GM10248 (cell line): ENCODE measurements at regions of chr17 and their contacts with region 1.

Region 1: GRCh38 chr17:29219378-29220047 is 27.1 kb upstream of the CRYBA1 start:
- DNase-seq: peak; percentile 80
- CTCF ChIP-seq: peak; percentile 87

Region 2: DNA sequence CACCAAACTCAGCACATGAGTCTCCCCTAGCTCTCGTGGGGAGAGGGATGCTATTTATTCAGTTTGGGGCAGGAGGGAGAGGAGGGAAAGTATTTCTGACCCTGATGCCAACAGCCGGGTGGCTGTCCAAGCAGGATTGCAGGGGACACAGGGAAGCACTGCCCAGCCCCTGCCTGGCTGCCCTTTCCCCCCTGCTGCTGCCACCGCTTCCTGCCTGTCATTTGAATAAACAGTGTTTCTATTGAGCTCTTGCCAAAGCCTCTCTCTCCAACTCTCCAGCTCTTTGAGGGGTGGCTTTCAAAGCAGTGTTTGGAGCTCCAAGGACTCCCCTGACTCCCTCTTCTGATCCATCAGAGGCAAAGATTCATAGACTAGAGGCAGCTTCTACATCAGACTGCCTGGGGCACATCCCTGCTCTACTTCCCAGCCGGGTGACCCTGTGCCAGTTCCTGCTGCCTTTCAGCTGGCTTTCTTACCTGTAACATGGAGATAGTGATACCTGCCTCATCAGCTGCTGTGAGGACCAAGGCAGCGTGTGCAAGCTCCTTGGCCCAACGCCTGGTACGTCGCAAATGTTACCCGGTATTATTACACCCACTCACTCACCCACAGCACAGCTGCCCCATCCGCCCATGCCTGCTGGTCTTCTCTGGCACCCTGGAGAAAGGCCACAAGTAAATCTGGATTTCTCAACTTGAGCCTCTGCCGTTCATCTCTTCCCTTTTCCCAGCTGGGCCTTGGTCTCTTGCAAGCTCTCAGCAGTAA is 517.3 kb before region 1 on chr17:
- CTCF ChIA-PET with region 1: no interaction called
- POLR2A ChIA-PET with region 1: no interaction called
- DNase-seq: no peak
- CTCF ChIP-seq: no peak

Region 3: DNA sequence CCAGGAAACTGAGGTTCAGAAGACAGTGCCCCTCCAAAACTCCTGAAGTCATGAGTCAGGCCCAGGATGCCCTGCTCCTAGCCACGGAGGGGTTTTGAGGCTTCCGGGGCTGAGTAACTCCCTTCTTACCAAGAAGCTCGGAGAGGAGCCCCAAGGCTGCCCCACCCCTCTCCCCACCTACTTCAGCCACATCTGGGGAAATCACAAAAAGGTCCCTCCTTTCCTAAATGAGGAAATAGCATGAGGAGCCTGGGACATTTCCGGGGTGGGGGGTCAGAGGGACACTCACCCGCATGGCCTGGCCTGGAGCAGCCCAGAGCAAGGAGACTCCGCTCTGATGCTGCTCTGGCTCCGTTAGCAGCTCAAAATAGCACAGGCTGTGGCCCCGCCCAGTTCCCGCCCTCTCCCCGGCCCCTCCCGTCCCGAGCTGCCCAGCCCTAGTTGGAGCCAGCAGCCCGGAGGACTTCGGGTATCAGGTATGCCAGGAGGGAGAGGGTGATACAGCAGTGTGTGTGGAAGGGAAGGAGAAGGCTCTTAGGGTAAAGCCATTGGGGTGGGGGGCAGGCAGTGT is 79.4 kb before region 1 on chr17:
- CTCF ChIA-PET with region 1: interaction called, 298 read pairs
- POLR2A ChIA-PET with region 1: no interaction called
- DNase-seq: peak; percentile 80
- CTCF ChIP-seq: no peak

Region 4: DNA sequence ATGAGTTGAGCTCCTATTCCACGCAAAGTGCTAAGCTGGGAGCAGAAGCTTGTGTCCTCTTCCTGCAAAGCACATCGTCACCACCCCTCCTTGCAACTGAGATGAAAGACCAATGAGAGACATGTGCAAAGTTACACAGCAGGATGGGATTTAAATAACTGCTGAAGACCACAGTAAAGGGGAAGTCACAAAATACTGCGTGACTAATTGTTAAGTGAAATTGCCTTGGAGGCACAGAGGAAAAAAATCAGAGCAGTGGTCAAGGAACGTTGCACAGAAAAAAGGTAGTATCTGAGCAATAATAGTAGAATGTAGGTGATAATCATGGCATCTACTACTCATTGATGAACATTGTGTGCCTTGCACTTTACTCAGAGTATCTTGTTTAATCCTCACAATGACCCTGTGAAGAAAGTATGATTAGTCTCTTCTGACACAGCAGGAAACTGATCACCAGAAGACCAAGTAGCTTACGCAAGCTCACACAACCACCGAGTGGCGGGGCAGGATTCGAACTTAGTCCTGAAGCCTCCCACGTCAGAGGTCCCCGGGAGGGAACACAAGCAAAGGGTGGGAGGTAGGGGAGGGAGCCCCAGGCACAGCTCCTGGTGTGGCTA is 23.9 kb before region 1 on chr17:
- CTCF ChIA-PET with region 1: interaction called, 48 read pairs
- POLR2A ChIA-PET with region 1: no interaction called
- DNase-seq: peak; percentile 64
- CTCF ChIP-seq: no peak

Region 5: DNA sequence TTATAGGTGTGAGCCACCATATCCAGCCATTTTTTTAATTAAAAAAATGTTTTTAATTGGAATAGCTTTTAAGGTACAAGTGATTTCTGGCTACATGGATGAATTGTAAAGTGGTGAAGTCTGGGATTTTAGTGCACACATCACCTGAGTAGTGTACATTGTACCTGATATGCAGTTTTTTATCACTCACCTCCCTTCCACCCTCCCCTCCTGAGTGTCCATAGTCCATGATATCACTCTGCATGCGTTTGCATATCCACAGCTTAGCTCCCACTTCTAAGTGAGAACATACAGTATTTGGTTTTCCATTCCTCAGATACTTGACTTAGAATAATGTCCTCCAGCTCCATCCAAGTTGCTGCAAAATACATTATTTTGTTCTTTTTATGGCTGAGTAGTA is 13.8 kb after region 1 on chr17:
- CTCF ChIA-PET with region 1: interaction called, 15 read pairs
- POLR2A ChIA-PET with region 1: no interaction called
- DNase-seq: no peak
- CTCF ChIP-seq: no peak

Region 6: DNA sequence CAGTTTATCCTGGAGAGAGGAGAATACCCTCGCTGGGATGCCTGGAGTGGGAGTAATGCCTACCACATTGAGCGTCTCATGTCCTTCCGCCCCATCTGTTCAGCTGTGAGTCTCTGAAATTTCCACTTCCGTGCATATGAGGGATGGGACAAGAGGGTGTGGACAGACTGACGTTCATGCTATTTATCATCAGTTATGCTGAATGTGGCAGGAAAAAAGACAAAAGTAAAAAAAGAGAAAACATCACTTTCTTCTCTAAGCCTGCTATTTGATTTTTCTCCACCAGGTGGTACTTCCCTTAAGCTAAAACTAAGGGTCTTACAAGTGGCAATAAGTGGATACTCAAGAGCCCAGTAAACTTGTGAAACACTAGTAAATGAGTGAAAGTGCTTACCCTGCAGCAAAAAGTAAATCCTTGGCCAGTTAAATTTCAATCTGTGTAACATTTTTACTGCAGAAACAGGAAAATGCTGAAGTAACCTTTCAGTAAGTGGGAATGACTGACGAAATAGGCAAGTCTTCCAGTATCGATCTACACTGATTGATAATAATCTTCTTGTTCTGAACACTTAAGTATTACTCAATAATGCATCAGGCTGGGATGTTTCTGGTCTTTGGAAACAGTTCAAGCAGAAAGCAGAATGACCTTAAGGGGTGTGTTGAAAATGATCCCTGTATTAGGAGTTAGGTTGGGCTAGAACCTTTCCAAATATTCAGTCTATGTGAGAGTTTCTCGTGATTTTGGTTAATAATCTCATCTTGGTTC is 32.8 kb after region 1 on chr17:
- CTCF ChIA-PET with region 1: interaction called, 22 read pairs
- POLR2A ChIA-PET with region 1: no interaction called
- DNase-seq: no peak
- CTCF ChIP-seq: peak; percentile 13